Activated naive CD4-positive, alpha-beta T cell treated with anti-CD3 and anti-CD28 coated beads for 36 hours (primary cell): ENCODE measurements at regions of chr12 and their contacts with region 1.

Region 1: GRCh38 chr12:104764225-104765091 is 193.6 kb downstream of the SLC41A2 start:
- DNase-seq: peak; percentile 44
- H3K4me3 Mint-ChIP-seq: no peak overlapping the region
- H3K27ac Mint-ChIP-seq: no peak overlapping the region
- H3K4me1 Mint-ChIP-seq: peaks cover 23% of the 10 kb centered on the region
- H3K27me3 Mint-ChIP-seq: no peaks in the 10 kb centered on the region

Region 2: GRCh38 chr12:104720339-104721038 is 44.0 kb before region 1 on chr12:
- CTCF ChIA-PET with region 1: no interaction called
- intact Hi-C with region 1: loop called (anchors 2 kb)
- DNase-seq: peak; percentile 81
- H3K4me3 Mint-ChIP-seq: peak overlapping the region; percentile 70
- H3K27ac Mint-ChIP-seq: peak overlapping the region; percentile 79
- H3K4me1 Mint-ChIP-seq: peaks cover 35% of the 10 kb centered on the region
- H3K27me3 Mint-ChIP-seq: no peaks in the 10 kb centered on the region

Region 3: DNA sequence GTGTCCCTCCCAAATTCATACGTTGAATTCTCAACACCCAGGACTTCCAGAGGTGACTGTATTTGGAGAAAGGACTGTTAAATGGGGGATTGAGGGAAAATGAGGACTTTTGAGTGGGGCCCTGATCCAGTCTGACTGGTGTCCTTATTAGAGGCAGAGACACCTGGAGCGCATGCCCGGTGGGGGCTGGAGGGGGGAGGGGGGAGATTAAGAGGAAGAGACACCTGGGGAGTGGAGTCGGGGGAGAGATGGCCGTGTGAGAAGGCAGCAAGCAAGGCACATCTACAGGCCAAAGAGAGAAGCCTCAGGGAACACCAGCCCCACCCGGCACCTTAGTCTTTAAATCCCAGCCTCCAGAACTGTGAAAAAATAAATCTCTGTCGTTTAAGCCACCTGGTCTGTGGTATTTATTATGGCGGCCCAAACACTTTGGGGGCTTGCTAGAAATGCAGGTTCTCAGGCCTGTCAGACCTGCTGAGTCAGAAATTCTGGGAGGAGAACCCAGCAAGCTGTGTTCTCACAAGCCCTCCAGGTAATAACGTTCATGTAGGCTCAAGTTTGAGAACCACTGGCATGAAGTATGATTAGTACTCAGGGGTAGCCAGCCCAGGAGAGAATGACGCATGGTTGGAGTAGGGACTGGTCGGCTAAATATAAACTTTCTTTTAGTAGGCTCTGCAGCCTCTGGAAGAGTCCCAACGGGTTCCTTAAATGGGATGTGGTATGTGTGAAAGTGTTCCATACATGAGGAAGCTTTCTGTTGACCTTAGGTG is 15.9 kb before region 1 on chr12:
- CTCF ChIA-PET with region 1: interaction called, 3 read pairs
- intact Hi-C with region 1: loop called (anchors 1 kb)
- DNase-seq: no peak
- H3K4me3 Mint-ChIP-seq: peak overlapping the region; percentile 51
- H3K27ac Mint-ChIP-seq: no peak overlapping the region
- H3K4me1 Mint-ChIP-seq: peaks cover 43% of the 10 kb centered on the region
- H3K27me3 Mint-ChIP-seq: no peaks in the 10 kb centered on the region